ENCODE measurements at regions of chr17 and their contacts with region 1.

Region 1: DNA sequence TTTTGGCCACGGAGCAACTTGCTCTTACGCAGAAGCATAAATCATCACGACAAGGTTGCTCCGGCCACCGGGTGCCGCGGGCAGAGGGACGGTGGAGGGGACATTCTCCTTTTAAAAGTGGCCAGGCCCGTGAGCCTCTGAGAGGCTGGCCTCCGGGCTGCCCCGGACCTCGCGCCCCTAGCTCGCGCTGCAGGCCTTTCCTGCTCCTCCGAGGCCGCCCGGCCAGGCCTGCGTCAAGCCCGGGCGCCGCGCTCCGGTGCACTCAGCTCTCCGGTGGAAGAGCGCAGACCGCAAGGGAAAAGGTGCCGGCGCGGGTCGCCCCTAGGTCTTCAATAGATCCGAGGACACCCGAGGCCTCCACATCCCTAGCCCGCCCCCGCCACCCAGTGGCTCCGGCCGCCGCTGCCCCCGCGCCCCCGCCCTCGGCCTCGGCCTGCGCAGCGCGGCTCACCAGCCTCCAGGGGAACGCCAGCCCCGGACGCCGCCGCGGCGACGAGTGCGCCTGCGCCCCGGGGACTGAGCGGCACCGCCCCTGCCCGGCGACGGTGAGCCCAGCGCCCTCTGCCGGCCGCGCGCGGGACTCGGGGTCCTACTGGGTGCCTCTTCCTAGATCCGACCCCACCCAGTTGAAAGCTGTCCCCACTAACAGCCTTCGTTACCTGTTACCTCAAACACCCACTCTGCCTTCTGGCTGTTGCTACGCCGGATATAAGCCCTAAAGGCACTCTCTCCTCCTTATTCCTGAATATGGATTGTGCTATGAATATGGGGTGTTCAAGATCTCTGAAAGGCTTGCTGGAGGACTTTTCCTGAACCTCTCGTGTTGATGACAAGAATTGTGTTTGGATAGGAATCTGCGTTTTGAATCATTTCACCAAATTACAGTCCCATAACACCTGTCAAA is at the start of gene LYRM9:
- DNase-seq: peak; percentile 75 to 98
- H3K4me3 ChIP-seq: peak within 1 kb of the TSS; percentile 42 to 63 (median 61)
- H3K27ac ChIP-seq: no peak within 1 kb of the TSS
- H3K4me1 ChIP-seq: peaks cover 4 to 29% (median 21%) of the 10 kb centered on the region in 4 experiments; a peak in 6 of 7 replicates
- H3K27me3 ChIP-seq: peaks cover 0 to 6% (median 0%) of the 10 kb centered on the region in 4 experiments; a peak in 2 of 7 replicates
- CTCF ChIP-seq: peak; percentile 81 to 92 (median 83)
- EP300 ChIP-seq: no peak; a peak in 1 of 3 replicates
- POLR2A ChIP-seq: 0 out of 3 replicates have a peak, but pooled peaks of 1 of the 2 experiments have one; percentile 31
- RAD21 ChIP-seq: peak; percentile 34 to 63; a peak in 3 of 4 replicates
- total RNA-seq, gene LYRM9: 2.1 and 4.3 TPM in 2 replicates

Region 2: DNA sequence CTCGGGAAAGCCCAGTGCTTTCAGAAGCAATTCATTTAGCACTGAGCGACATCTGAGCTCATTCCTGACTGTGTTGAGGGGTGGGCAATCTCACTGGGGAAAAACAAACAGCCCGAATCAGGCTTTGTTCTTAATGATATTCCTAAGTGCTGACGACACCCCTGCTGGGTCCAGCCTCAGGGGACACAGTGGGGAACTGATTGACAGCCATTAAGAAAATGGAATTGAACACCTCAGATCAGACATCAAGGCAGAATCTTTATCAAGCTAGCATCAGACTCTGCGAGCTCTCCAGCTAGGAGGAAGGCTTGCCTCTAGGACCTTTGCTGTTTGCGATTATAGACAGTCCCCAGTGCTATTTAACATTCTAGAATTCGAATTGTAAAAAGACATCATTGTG is 22.6 kb after region 1 on chr17:
- CTCF ChIA-PET with region 1: interaction called, 11 read pairs
- POLR2A ChIA-PET with region 1: interaction called, 3 read pairs
- DNase-seq: peak; percentile 53 to 60
- H3K4me3 ChIP-seq: no peak overlapping the region
- H3K27ac ChIP-seq: no peak overlapping the region
- H3K4me1 ChIP-seq: peaks cover 1 to 12% (median 8%) of the 10 kb centered on the region in 4 experiments; a peak in 3 of 7 replicates
- H3K27me3 ChIP-seq: peaks cover 34 to 68% (median 61%) of the 10 kb centered on the region in 4 experiments
- CTCF ChIP-seq: no peak
- EP300 ChIP-seq: no peak
- POLR2A ChIP-seq: no peak
- RAD21 ChIP-seq: no peak

Measured in H1 (cell line).